ENCODE measurements at regions of chr2 and their contacts with region 1.

Region 1: DNA sequence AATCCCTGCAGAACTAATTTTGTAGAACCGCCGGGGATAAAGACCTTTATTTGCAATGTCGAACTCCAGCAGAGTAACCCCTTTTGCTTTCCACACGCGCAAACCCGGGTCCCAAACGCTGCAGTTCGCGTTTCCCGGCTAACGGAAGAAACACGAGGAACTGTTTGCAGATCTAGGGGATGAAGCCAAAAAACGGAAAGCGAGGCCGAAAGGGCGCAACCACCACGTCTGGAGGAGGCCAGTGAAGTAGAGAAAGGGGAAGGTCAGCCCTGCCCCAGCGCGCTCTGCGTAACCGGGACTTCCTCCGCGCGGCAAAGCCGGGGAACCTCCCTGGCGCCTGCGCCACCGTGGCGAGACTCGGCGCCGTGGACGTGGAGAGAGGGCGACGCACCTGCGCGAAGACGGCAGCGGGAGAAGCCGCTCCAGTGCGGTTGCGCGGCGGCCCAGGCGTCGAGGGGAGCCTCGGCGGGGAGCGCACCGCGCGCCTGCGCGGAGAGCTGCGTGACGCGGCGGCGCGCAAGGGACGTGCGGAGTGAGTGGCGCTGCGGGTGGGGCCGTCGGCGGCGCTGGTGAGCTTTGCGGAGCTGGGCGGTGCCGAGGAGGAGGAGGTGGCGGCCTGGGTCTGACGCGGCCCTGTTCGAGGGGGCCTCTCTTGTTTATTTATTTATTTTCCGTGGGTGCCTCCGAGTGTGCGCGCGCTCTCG is at the start of gene PPP1CB:
- DNase-seq: peak; percentile 97
- ATAC-seq: peak; percentile 84
- H3K4me3 Mint-ChIP-seq: peak within 1 kb of the TSS; percentile 85
- H3K27ac Mint-ChIP-seq: peak within 1 kb of the TSS; percentile 98
- H3K4me1 Mint-ChIP-seq: peaks cover 48% of the 10 kb centered on the region
- H3K27me3 Mint-ChIP-seq: no peaks in the 10 kb centered on the region
- total RNA-seq, gene PPP1CB: 174 to 179 TPM

Region 2: GRCh38 chr2:28586867-28587266 is 164.5 kb before region 1 on chr2:
- POLR2A ChIA-PET with region 1: interaction called, 11 read pairs
- DNase-seq: peak; percentile 80
- ATAC-seq: peak; percentile 85
- H3K4me3 Mint-ChIP-seq: peak overlapping the region; percentile 72
- H3K27ac Mint-ChIP-seq: peak overlapping the region; percentile 72
- H3K4me1 Mint-ChIP-seq: peaks cover 53% of the 10 kb centered on the region
- H3K27me3 Mint-ChIP-seq: no peaks in the 10 kb centered on the region

Region 3: DNA sequence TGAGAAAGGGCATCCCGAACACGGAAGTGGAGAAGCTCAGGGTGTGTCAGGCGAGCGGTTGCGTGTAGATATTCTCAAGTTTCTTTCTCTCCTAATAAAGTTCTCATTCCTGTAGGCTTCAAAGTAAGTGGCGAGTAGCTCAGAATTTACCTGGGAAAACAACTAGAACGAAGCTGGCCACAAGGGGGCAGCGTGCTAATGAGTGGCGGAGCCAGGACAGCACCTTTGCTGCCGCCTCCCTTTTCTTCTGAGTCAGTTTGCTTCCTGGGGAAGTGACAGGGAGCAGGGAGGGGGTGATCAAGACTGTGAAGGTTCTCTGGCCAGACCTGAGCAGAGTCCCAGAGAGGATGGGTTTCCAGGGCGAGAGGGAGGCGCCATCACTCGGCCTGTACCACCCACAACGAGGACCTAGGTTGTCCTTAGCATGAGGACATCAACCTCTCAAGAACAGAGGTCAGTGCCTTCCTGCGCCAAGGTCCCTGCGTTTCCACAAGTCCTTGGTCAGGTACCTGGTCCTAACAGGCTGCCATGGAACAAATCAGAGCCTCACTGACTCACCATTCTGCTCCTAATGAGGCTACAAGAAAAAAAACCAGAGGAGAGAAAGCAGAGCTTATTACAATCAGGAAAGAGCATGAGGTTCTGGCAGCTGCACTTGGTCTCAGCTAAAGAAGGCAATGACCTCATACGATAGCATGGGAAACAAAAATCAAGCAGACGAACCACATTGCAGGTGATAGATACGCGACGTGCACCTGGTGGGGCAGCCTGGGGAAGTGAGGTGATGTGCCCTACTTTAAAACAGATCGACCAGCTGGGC is 156.9 kb before region 1 on chr2:
- POLR2A ChIA-PET with region 1: interaction called, 31 read pairs
- DNase-seq: peak; percentile 84
- ATAC-seq: peak; percentile 89
- H3K4me3 Mint-ChIP-seq: peak overlapping the region; percentile 65
- H3K27ac Mint-ChIP-seq: peak overlapping the region; percentile 77
- H3K4me1 Mint-ChIP-seq: peaks cover 21% of the 10 kb centered on the region
- H3K27me3 Mint-ChIP-seq: no peaks in the 10 kb centered on the region

Region 4: DNA sequence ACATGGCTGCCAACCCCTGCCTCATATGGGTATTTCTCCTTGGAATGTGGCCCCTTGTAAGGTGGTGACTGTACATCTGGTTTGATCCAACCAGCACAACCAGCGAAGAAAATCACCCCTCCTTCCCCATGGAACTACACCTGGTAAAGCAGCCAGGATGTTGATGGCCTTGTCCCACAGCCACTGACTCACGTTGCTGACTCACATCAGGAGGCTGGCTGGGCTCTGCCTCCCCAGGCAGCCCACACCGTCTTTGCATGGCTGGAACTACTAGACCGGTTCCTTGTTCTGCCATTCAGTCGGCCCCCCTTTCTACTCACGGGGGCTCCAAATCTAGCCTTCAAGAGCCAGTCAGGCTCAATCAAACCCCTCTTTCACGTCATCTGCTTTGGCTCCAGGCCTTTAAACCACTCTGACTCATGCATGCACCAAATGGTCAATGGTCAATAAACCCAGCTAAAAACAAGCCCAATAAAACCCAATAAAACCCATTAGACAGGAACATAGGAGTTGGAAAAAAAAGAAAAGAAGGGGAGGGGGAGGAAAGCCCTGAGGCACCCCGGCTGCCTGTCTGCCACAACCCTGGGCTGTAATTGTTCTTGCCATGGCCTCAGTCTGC is 140.7 kb before region 1 on chr2:
- POLR2A ChIA-PET with region 1: interaction called, 19 read pairs
- DNase-seq: no peak
- ATAC-seq: no peak
- H3K4me3 Mint-ChIP-seq: no peak overlapping the region
- H3K27ac Mint-ChIP-seq: peak overlapping the region; percentile 40
- H3K4me1 Mint-ChIP-seq: peaks cover 22% of the 10 kb centered on the region
- H3K27me3 Mint-ChIP-seq: no peaks in the 10 kb centered on the region

Region 5: DNA sequence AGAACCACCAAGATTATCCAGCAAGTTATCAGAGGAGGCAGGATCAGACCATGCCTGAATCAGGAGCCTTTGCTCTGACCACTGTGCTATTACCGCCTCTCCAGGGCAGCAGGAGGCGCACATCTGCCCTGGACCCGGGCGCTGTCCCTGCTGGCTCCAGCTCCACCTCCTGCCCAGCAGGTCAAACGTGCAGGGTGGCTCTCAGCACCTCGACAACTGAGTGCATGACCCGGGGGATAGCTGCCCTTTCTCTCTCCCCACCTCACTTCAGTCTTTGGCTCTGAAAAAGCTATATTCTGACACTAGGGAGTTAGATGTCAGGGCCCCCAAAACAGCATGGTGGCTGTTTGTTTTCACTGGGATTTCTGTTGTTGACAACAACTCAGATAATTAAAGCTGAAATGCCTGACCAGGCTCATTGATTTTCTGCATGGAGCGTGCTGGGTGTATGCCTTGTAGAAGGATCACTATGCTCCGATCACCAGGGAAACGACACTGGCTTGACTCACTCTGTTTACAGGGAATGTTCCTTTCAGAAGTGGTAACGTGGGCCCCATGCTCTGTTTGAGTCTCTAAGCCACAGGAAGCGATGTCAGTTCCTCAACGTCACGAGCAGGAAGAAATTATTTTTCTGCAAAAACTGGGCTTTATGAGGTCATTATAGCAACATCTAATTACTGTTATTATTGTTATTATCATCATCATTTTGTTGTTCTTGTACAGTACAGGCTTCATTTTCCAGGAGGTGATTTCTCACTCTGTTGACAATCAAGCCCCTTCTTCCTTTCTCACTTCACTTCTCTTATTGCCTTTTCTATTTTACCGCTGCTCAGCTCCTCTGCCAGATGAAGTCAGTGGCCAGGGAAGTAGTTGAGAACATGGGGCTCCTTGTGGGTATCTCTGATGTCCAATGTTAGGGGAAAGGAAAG is 130.0 kb before region 1 on chr2:
- POLR2A ChIA-PET with region 1: interaction called, 24 read pairs
- DNase-seq: peak; percentile 47
- ATAC-seq: peak; percentile 68
- H3K4me3 Mint-ChIP-seq: peak overlapping the region; percentile 66
- H3K27ac Mint-ChIP-seq: peak overlapping the region; percentile 91
- H3K4me1 Mint-ChIP-seq: peaks cover 83% of the 10 kb centered on the region
- H3K27me3 Mint-ChIP-seq: no peaks in the 10 kb centered on the region

Region 6: DNA sequence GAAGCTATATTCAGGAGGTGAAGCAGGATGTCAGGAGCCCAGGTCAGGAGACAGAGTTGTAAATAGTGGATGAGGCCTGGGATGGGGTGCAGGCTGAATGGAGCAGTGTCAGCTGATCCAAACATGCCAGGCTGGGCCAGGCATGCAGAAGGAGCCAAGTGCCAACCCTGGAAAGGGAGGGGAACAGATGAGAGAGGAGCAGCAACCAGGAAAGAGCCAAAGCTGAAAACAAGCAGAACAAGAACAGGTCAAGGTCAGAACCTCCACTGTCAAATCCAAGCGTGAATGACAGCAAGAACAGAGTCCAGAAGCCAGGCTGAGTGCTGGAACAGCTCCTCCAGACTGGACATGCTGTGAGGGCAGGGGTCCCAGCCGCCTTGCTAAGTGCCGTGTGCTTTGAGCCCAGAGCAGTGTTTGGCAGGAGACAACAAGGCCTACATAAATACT is 49.0 kb before region 1 on chr2:
- POLR2A ChIA-PET with region 1: no interaction called
- DNase-seq: no peak
- ATAC-seq: no peak
- H3K4me3 Mint-ChIP-seq: no peak overlapping the region
- H3K27ac Mint-ChIP-seq: no peak overlapping the region
- H3K4me1 Mint-ChIP-seq: peaks cover 7% of the 10 kb centered on the region
- H3K27me3 Mint-ChIP-seq: no peaks in the 10 kb centered on the region

Region 7: GRCh38 chr2:28870146-28870891 is 118.9 kb after region 1 on chr2 and contains the start of gene TRMT61B:
- POLR2A ChIA-PET with region 1: interaction called, 10 read pairs
- DNase-seq: peak; percentile 97
- ATAC-seq: peak; percentile 99
- H3K4me3 Mint-ChIP-seq: peak within 1 kb of the TSS; percentile 94
- H3K27ac Mint-ChIP-seq: peak within 1 kb of the TSS; percentile 97
- H3K4me1 Mint-ChIP-seq: peaks cover 20% of the 10 kb centered on the region
- H3K27me3 Mint-ChIP-seq: peaks cover 16% of the 10 kb centered on the region
- total RNA-seq, gene TRMT61B: 15.1 to 16.0 TPM